Mucosa of descending colon (tissue), 3 donors: ENCODE measurements at regions of chr15 and their contacts with region 1.

Region 1: DNA sequence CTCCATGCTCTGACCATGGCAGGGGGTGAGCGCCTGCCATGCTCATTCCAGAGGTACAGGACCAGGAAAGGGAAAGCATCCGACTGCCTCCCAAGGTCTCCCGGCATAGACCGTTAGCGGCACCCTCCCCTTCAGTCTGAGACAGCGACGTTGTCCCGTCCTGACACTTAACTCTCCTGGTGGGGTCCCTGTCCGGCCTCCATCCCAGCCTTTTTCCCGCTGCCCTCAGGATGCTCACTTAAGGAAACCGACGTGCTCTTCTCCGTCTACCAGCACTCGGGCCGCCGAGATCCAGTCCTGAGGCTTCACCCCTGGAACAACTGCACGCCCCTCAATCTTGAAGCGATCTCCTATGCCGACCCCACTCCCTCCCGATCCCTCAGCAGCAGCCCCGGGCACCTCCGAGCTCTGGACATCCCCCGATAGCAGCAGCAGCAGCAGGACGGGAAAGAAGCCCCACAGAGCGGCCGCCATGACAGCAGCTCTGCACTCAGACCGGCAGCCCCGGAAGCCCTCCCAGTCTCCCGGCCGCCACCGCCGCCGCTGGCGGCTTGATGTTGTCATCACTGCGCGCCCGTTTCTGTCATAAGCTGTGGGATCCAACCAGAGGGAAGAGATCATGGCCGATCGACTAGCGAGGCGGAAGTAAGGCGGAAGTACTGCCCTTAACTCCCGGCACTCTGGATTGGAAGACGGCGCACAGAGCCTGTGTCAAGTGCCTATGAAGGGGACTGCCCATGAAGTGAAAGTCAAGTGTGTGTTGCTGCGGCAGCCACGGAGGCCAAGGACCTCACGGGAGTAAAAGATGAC is at the starts of genes EMC7 and PGBD4:
- DNase-seq: peak; percentile 98 to 99 (median 99)
- ATAC-seq: peak; percentile 99
- H3K4me3 ChIP-seq: peak within 1 kb of the TSS; percentile 67
- H3K4me1 ChIP-seq: peaks cover 12% of the 10 kb centered on the region
- CTCF ChIP-seq: peak; percentile 6
- total RNA-seq, gene EMC7: 56.2 to 70.2 (median 59.6) TPM
- total RNA-seq, gene PGBD4: 1.4 to 2.0 (median 1.7) TPM

Region 2: DNA sequence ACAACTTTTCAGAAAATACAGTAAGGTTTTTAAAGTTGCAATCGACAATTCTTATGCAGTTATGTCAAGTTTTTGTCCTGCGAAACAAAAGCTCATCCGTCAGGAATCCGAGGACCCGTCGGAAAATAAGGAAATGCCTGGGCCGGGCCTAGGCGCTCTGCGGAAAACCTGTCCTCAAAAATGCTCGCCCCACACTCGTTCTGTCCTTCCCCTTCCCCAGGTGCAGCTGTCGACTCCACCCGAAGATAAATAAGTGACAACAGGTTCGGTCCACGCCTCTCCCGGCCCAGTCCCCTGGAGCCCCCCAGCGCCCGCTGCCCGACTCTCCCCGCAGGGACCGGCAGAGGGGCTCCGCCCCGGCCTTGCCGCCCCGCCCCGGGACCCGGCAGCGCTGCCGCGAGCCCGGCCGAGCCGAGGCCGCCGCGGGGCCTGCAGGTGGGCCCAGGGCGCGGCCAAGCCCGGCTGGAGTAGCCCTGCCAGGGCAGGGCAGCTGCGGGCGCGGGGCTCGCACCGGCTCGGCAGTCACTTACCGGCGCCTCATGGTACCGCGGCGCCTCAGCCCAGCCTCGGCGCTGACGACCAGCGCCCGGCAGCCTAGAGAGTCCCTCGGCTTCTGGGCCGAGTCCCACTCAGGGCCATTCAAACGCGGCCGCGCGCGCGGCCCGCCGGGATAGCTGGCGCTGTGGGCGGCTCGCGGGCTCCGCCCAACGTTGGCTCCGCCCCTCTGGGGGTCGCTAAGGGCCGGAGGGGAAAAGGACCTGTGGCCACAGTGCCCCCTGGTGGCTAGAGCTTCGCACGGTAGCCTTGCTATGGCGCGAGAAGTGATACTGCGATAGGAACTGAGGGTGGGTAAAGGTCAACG is 108.1 kb after region 1 on chr15 and contains the start of gene KATNBL1:
- intact Hi-C with region 1: loop called in 1 of 2 experiments (anchors 10 kb)
- DNase-seq: peak; percentile 98 to 99 (median 99)
- ATAC-seq: peak; percentile 99
- H3K4me3 ChIP-seq: peak within 1 kb of the TSS; percentile 10
- H3K4me1 ChIP-seq: peaks cover 10% of the 10 kb centered on the region
- CTCF ChIP-seq: peak; percentile 88
- total RNA-seq, gene KATNBL1: 42.8 to 52.6 (median 46.2) TPM

Region 3: GRCh38 chr15:34223904-34224596 is 122.5 kb after region 1 on chr15:
- intact Hi-C with region 1: loop called (anchors 5 to 10 kb)
- DNase-seq: peak in 2 of 3 donors; percentile 25 to 43
- ATAC-seq: no peak
- H3K4me3 ChIP-seq: peak overlapping the region; percentile 77
- H3K4me1 ChIP-seq: peaks cover 6% of the 10 kb centered on the region
- CTCF ChIP-seq: no peak